Natural killer cell (primary cell): ENCODE measurements at regions of chr7 and their contacts with region 1.

Region 1: GRCh38 chr7:140003913-140004382 is 58.8 kb downstream of the PARP12 start:
- DNase-seq: peak in 1 of 2 donors; percentile 60
- ATAC-seq: peak in 2 of 3 donors; percentile 26 to 41
- H3K4me3 ChIP-seq: no peak overlapping the region
- H3K4me3 Mint-ChIP-seq: no peak overlapping the region
- H3K27ac ChIP-seq: no peak overlapping the region
- H3K27ac Mint-ChIP-seq: peak overlapping the region in 1 of 2 donors; percentile 24
- H3K4me1 ChIP-seq: no peaks in the 10 kb centered on the region
- H3K4me1 Mint-ChIP-seq: peaks cover 6% of the 10 kb centered on the region in 2 donors
- H3K27me3 ChIP-seq: no peaks in the 10 kb centered on the region
- H3K27me3 Mint-ChIP-seq: no peaks in the 10 kb centered on the region
- CTCF ChIP-seq: peak; percentile 61

Region 2: GRCh38 chr7:139500770-139501138 is 503.2 kb before region 1 on chr7:
- intact Hi-C with region 1: loop called (anchors 2 kb)
- DNase-seq: no peak
- ATAC-seq: no peak
- H3K4me3 ChIP-seq: no peak overlapping the region
- H3K4me3 Mint-ChIP-seq: no peak overlapping the region
- H3K27ac ChIP-seq: no peak overlapping the region
- H3K27ac Mint-ChIP-seq: no peak overlapping the region
- H3K4me1 ChIP-seq: peaks cover 5% of the 10 kb centered on the region
- H3K4me1 Mint-ChIP-seq: peaks cover 5 to 7% of the 10 kb centered on the region in 2 donors
- H3K27me3 ChIP-seq: no peaks in the 10 kb centered on the region
- H3K27me3 Mint-ChIP-seq: peaks cover 5 to 7% of the 10 kb centered on the region in 2 donors
- CTCF ChIP-seq: no peak

Region 3: DNA sequence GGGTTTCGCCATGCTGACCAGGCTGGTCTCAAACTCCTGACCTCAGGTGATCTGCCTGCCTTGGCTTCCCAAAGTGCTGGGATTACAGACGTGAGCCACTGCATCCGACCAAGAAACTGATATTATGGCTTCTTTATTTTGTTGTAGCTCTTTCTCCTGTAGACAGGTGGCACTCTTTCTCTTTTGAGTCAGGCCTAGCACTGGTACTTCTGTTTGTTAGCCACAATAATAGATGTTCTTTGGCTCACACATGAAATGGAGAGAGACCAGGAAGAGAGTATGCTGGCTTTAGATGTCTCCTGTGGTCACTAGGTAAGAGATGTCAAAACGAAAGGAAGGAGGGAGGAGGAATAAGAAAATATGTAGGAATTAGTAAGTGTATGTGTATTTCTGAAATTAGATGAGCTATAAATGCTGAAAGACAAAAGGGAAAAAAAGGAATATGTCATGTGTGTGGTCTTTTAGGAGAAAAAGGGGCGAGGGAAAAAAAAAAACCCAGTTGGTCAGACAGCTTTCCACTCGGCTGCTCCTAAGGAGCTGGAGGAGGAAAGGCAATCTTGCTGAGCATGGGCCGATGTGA is 401.7 kb before region 1 on chr7:
- intact Hi-C with region 1: loop called (anchors 1 kb)
- DNase-seq: peak in 1 of 2 donors; percentile 53
- ATAC-seq: peak; percentile 66 to 81 (median 71)
- H3K4me3 ChIP-seq: no peak overlapping the region
- H3K4me3 Mint-ChIP-seq: no peak overlapping the region
- H3K27ac ChIP-seq: no peak overlapping the region
- H3K27ac Mint-ChIP-seq: no peak overlapping the region
- H3K4me1 ChIP-seq: no peaks in the 10 kb centered on the region
- H3K4me1 Mint-ChIP-seq: peaks cover 5 to 8% of the 10 kb centered on the region in 2 donors
- H3K27me3 ChIP-seq: no peaks in the 10 kb centered on the region
- H3K27me3 Mint-ChIP-seq: no peaks in the 10 kb centered on the region
- CTCF ChIP-seq: peak; percentile 45

Region 4: GRCh38 chr7:139618482-139619366 is 385.2 kb before region 1 on chr7:
- intact Hi-C with region 1: loop called (anchors 1 kb)
- DNase-seq: peak in 1 of 2 donors; percentile 66
- ATAC-seq: peak in 2 of 3 donors; percentile 36 to 44
- H3K4me3 ChIP-seq: no peak overlapping the region
- H3K4me3 Mint-ChIP-seq: no peak overlapping the region
- H3K27ac ChIP-seq: no peak overlapping the region
- H3K27ac Mint-ChIP-seq: peak overlapping the region in 1 of 2 donors; percentile 66
- H3K4me1 ChIP-seq: no peaks in the 10 kb centered on the region
- H3K4me1 Mint-ChIP-seq: peaks cover 0 to 15% of the 10 kb centered on the region in 2 donors
- H3K27me3 ChIP-seq: no peaks in the 10 kb centered on the region
- H3K27me3 Mint-ChIP-seq: no peaks in the 10 kb centered on the region
- CTCF ChIP-seq: peak; percentile 34

Region 5: GRCh38 chr7:139725077-139725476 is 278.9 kb before region 1 on chr7:
- intact Hi-C with region 1: loop called (anchors 5 kb)
- DNase-seq: no peak
- ATAC-seq: peak; percentile 44 to 73 (median 69)
- H3K4me3 ChIP-seq: no peak overlapping the region
- H3K4me3 Mint-ChIP-seq: no peak overlapping the region
- H3K27ac ChIP-seq: peak overlapping the region; percentile 52
- H3K27ac Mint-ChIP-seq: peak overlapping the region; percentile 59 to 88
- H3K4me1 ChIP-seq: peaks cover 26% of the 10 kb centered on the region
- H3K4me1 Mint-ChIP-seq: peaks cover 50 to 56% of the 10 kb centered on the region in 2 donors
- H3K27me3 ChIP-seq: no peaks in the 10 kb centered on the region
- H3K27me3 Mint-ChIP-seq: no peaks in the 10 kb centered on the region
- CTCF ChIP-seq: no peak

Region 6: GRCh38 chr7:139875821-139876241 is 128.1 kb before region 1 on chr7:
- intact Hi-C with region 1: no loop called
- DNase-seq: peak in 1 of 2 donors; percentile 56
- ATAC-seq: peak; percentile 66 to 80 (median 79)
- H3K4me3 ChIP-seq: no peak overlapping the region
- H3K4me3 Mint-ChIP-seq: peak overlapping the region; percentile 74
- H3K27ac ChIP-seq: peak overlapping the region; percentile 88
- H3K27ac Mint-ChIP-seq: peak overlapping the region; percentile 83
- H3K4me1 ChIP-seq: peaks cover 48% of the 10 kb centered on the region
- H3K4me1 Mint-ChIP-seq: peaks cover 73 to 81% of the 10 kb centered on the region in 2 donors
- H3K27me3 ChIP-seq: no peaks in the 10 kb centered on the region
- H3K27me3 Mint-ChIP-seq: no peaks in the 10 kb centered on the region
- CTCF ChIP-seq: no peak

Region 7: DNA sequence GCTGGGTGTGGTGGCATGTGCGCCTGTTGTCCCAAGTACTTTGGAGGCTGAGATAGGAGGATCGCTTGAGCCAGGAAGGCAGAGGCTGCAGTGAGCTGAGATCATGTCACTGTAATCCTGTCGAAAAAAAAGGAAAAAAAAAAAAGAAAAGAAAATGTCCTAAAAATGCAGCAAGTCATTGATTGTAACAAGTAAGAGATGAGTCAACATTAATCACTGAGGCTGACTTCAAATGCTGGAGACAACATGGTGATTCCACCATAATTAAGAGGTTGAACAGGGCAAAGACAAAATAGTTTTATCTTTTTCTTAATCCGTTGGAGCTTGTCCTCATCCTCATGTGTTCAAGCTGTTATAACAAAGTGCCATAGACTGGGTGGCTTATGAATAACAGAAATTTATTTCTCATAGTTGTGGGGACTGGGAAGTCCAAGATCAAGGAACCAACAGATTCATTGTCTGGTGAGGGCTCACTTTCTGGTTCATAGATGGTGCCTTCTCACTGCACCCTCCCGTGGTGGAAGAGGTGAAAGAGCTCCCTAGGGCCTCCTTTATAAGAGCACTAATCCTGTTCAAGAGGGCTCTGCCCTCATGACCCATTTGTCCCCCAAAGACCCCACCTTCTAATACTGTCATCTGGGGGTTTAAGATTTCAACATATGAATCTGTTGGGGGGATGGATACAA is 114.6 kb before region 1 on chr7:
- intact Hi-C with region 1: loop called (anchors 5 kb)
- DNase-seq: no peak
- ATAC-seq: no peak
- H3K4me3 ChIP-seq: no peak overlapping the region
- H3K4me3 Mint-ChIP-seq: no peak overlapping the region
- H3K27ac ChIP-seq: no peak overlapping the region
- H3K27ac Mint-ChIP-seq: peak overlapping the region; percentile 92 to 94
- H3K4me1 ChIP-seq: peaks cover 22% of the 10 kb centered on the region
- H3K4me1 Mint-ChIP-seq: peaks cover 57 to 60% of the 10 kb centered on the region in 2 donors
- H3K27me3 ChIP-seq: no peaks in the 10 kb centered on the region
- H3K27me3 Mint-ChIP-seq: no peaks in the 10 kb centered on the region
- CTCF ChIP-seq: no peak

Region 8: GRCh38 chr7:139950848-139951512 is 53.0 kb before region 1 on chr7:
- intact Hi-C with region 1: no loop called
- DNase-seq: no peak
- ATAC-seq: no peak
- H3K4me3 ChIP-seq: no peak overlapping the region
- H3K4me3 Mint-ChIP-seq: no peak overlapping the region
- H3K27ac ChIP-seq: no peak overlapping the region
- H3K27ac Mint-ChIP-seq: no peak overlapping the region
- H3K4me1 ChIP-seq: no peaks in the 10 kb centered on the region
- H3K4me1 Mint-ChIP-seq: peaks cover 0 to 4% of the 10 kb centered on the region in 2 donors
- H3K27me3 ChIP-seq: no peaks in the 10 kb centered on the region
- H3K27me3 Mint-ChIP-seq: no peaks in the 10 kb centered on the region
- CTCF ChIP-seq: no peak